Gastrocnemius medialis (tissue), 4 donors: ENCODE measurements at regions of chr1 and their contacts with region 1.

Region 1: GRCh38 chr1:115184951-115185331 is 95.6 kb upstream of the TSPAN2 start:
- DNase-seq: peak; percentile 74 to 89
- ATAC-seq: peak; percentile 80 to 85
- H3K4me3 ChIP-seq: peak overlapping the region; percentile 27 to 50 (median 33)
- H3K27ac ChIP-seq: peak overlapping the region; percentile 86 to 96 (median 90)
- H3K4me1 ChIP-seq: peaks cover 32 to 52% of the 10 kb centered on the region in 2 donors
- H3K27me3 ChIP-seq: no peaks in the 10 kb centered on the region
- CTCF ChIP-seq: no peak
- POLR2A ChIP-seq: peak; percentile 53 to 56

Region 2: GRCh38 chr1:115445090-115445489 is 260.1 kb after region 1 on chr1:
- in situ Hi-C with region 1: no loop called
- intact Hi-C with region 1: no loop called
- DNase-seq: no peak
- ATAC-seq: no peak
- H3K4me3 ChIP-seq: no peak overlapping the region
- H3K27ac ChIP-seq: no peak overlapping the region
- H3K4me1 ChIP-seq: no peaks in the 10 kb centered on the region
- H3K27me3 ChIP-seq: no peaks in the 10 kb centered on the region
- CTCF ChIP-seq: no peak
- POLR2A ChIP-seq: no peak

Region 3: DNA sequence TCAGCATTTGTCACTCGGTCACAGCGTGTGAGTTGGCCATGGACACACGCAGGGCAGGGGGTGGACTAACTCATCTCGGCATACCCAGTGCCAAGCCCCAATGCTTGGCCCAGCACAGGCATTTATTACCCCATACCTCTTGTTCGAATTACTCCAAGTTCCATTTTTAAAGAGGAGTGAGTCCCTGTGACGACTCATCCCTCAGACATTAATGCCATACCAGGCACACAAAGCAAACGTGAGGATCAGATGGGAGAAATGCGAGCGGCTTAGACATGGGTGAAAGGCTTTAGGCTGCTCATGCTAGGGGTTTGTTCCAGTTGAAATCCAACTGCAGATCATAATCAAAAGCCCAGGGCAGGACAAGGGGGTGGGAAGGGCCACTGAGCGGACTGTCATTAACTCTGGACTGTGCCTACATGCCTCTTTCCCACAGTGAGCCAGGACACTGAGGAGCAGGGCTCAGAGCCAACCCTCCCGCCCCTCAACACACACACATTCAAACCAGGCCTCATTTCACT is 271.6 kb after region 1 on chr1:
- in situ Hi-C with region 1: no loop called
- intact Hi-C with region 1: loop called (anchors 5 kb)
- DNase-seq: peak in 1 of 2 donors; percentile 49
- ATAC-seq: peak; percentile 37 to 77
- H3K4me3 ChIP-seq: no peak overlapping the region
- H3K27ac ChIP-seq: peak overlapping the region; percentile 50 to 68 (median 58)
- H3K4me1 ChIP-seq: peaks cover 5 to 7% of the 10 kb centered on the region in 2 donors
- H3K27me3 ChIP-seq: no peaks in the 10 kb centered on the region
- CTCF ChIP-seq: no peak
- POLR2A ChIP-seq: no peak

Region 4: GRCh38 chr1:115753830-115754229 is 568.9 kb after region 1 on chr1:
- in situ Hi-C with region 1: loop called in 2 of 4 experiments (anchors 25 kb)
- intact Hi-C with region 1: loop called (anchors 5 kb)
- DNase-seq: peak; percentile 94
- ATAC-seq: peak; percentile 89 to 90
- H3K4me3 ChIP-seq: peak overlapping the region in 2 of 4 donors; percentile 3 to 13
- H3K27ac ChIP-seq: peak overlapping the region; percentile 87 to 91 (median 90)
- H3K4me1 ChIP-seq: peaks cover 65 to 78% of the 10 kb centered on the region in 2 donors
- H3K27me3 ChIP-seq: no peaks in the 10 kb centered on the region
- CTCF ChIP-seq: no peak
- POLR2A ChIP-seq: peak in 1 of 2 donors; percentile 42